ENCODE measurements at regions of chr17 and their contacts with region 1.

Region 1: DNA sequence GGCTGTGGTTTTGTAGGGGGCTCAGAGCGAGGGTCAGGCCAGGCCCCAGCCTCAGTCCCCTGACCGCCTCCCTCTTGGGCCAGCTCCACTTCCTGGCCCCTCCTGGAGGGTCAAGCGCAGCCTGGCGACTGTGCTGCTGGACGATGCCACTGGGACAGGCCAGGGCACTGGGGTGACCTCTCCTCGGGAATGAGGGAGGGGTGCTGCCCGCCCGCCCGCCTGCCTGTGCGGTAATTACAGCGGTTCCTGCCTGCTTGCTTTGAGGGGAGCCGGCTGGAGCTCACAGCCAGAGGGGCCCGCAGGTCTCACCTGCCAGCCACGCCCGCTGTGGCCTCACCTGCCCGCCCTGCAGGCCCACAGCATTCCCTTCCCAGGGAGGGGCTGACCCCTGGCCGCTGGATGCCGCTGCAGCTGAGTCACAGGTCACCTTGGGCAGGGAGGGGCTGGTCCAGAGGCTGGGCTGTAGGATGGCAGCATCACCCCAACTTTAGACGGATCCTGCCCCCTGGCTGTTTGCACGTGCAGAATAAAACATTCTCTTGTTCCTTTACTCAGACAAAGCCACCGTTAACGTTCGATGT is 76.7 kb upstream of the CBX4 start:
- DNase-seq: no peak
- ATAC-seq: peak in 1 of 2 donors; percentile 22

Region 2: DNA sequence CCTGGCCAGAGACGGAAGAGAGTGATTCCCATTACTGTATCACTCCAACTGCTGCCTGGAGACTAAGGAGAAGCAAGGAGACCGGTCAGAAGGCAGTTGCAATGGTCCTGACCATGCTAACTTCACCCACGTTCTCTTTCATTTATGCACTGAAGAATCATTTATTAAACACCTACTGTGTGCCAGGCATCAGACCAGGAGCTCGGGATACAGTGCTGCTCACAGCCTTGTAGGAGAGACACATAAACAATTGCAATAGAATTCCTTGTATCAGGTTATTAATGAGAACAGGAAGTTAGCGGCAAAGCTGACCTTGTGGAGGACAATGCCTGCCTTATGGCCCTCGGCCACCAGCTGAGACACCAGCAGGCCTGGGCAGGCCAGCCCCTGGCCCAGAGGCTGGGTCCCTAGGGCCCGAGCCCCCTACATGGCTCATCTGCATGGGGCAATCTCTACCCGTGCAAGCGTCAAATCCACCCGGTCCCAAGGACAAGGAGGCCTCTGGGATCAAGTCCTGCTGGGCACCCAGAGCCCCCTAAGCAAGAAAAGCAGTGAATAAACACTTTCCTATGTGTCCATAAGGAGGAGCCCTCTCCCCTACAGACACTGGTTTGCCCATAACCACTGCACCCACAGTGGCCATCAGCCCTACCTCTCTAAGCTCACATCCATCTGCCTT is 193.8 kb before region 1 on chr17:
- intact Hi-C with region 1: no loop called
- DNase-seq: no peak
- ATAC-seq: no peak

Region 3: GRCh38 chr17:79808763-79809529 is 107.0 kb before region 1 on chr17:
- intact Hi-C with region 1: loop called in 1 of 2 experiments (anchors 5 kb)
- DNase-seq: no peak
- ATAC-seq: peak; percentile 7 to 38

Region 4: DNA sequence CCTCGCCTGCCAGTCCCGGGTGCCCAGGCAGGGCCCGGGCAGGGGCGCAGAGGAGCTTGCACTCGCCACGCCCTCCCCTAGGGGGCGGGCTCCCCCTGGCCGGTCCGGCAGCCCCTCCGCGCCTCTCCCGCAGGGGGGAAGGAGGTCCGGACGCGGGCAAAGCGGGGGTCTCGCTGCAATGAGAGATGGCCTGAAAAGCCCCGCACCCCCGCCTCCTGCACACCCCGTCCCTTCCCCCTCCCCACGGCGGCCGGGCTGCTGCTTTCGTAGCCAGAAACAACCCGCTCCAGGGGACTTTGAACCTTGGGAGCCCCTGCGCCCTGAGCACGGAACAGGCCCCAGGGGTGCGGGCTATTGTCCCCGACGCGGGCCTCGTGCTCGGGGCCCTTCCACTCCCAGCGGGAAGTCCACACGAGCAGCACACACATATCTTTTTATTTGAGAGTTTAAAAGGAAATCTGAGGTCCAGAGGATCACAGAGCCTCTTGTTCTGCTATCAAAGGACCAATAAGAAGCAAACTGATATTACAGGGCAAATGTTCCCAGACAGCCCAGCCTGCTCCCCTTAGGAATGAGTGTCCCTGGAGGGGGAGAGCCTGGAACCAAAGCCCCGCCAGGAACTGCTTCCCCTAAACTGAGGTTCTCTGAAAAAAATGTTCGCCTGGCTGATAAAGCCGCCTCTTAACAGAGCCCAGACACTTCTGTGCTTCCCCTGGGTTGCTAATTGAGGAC is 70.9 kb before region 1 on chr17:
- intact Hi-C with region 1: loop called in 1 of 2 experiments (anchors 5 kb)
- DNase-seq: peak; percentile 60
- ATAC-seq: peak; percentile 66 to 74

Region 5: GRCh38 chr17:79970576-79971068 is 54.7 kb after region 1 on chr17:
- intact Hi-C with region 1: loop called in 1 of 2 experiments (anchors 10 kb)
- DNase-seq: peak; percentile 22
- ATAC-seq: no peak

Region 6: GRCh38 chr17:80101011-80101945 is 185.3 kb after region 1 on chr17 and contains the start of gene GAA:
- intact Hi-C with region 1: no loop called
- DNase-seq: peak; percentile 91
- ATAC-seq: peak; percentile 92 to 95
- total RNA-seq, gene GAA: 43.8 to 48.7 TPM